AG04449 (cell line): ENCODE measurements at regions of chr3 and their contacts with region 1.

Region 1: GRCh38 chr3:126456766-126457388 is 18.8 kb downstream of the ZXDC start:
- DNase-seq: no peak
- H3K4me3 ChIP-seq: no peak overlapping the region
- CTCF ChIP-seq: no peak

Region 2: GRCh38 chr3:126472277-126473006 is 15.6 kb after region 1 on chr3:
- CTCF ChIA-PET with region 1: interaction called, 11 read pairs
- POLR2A ChIA-PET with region 1: no interaction called
- DNase-seq: peak; percentile 42
- H3K4me3 ChIP-seq: peak overlapping the region; percentile 6; the same call in 1 of the 2 replicates
- CTCF ChIP-seq: no peak